Esophagus muscularis mucosa (tissue), 4 donors: ENCODE measurements at regions of chr14 and their contacts with region 1.

Region 1: GRCh38 chr14:104563742-104564615 is 15.6 kb upstream of the C14orf180 start:
- DNase-seq: no peak
- H3K4me3 ChIP-seq: no peak overlapping the region
- H3K27ac ChIP-seq: no peak overlapping the region
- H3K4me1 ChIP-seq: peaks cover 9 to 13% (median 11%) of the 10 kb centered on the region in 4 donors
- H3K27me3 ChIP-seq: peaks cover 0 to 89% (median 4%) of the 10 kb centered on the region in 4 donors
- CTCF ChIP-seq: peak; percentile 60 to 73 (median 66)
- EP300 ChIP-seq: no peak
- POLR2A ChIP-seq: no peak

Region 2: GRCh38 chr14:104094709-104095438 is 469.1 kb before region 1 on chr14:
- intact Hi-C with region 1: loop called (anchors 10 kb)
- DNase-seq: no peak
- H3K4me3 ChIP-seq: no peak overlapping the region
- H3K27ac ChIP-seq: no peak overlapping the region
- H3K4me1 ChIP-seq: peaks cover 0 to 6% (median 2%) of the 10 kb centered on the region in 4 donors
- H3K27me3 ChIP-seq: peaks cover 0 to 59% (median 6%) of the 10 kb centered on the region in 4 donors
- CTCF ChIP-seq: peak; percentile 54 to 84 (median 71)
- EP300 ChIP-seq: no peak
- POLR2A ChIP-seq: no peak

Region 3: GRCh38 chr14:104137297-104138097 is 426.5 kb before region 1 on chr14:
- intact Hi-C with region 1: loop called (anchors 2 kb)
- DNase-seq: no peak
- H3K4me3 ChIP-seq: peak overlapping the region; percentile 52 to 65 (median 56)
- H3K27ac ChIP-seq: peak overlapping the region in 3 of 4 donors; percentile 5 to 59 (median 19)
- H3K4me1 ChIP-seq: peaks cover 32 to 50% (median 46%) of the 10 kb centered on the region in 4 donors
- H3K27me3 ChIP-seq: peaks cover 7 to 84% (median 32%) of the 10 kb centered on the region in 4 donors
- CTCF ChIP-seq: peak; percentile 74 to 88 (median 86)
- EP300 ChIP-seq: no peak
- POLR2A ChIP-seq: no peak

Region 4: GRCh38 chr14:104843442-104844305 is 279.7 kb after region 1 on chr14:
- intact Hi-C with region 1: no loop called
- DNase-seq: no peak
- H3K4me3 ChIP-seq: peak overlapping the region; percentile 46 to 59 (median 52)
- H3K27ac ChIP-seq: no peak overlapping the region
- H3K4me1 ChIP-seq: peaks cover 13 to 22% (median 20%) of the 10 kb centered on the region in 4 donors
- H3K27me3 ChIP-seq: peaks cover 0 to 69% (median 19%) of the 10 kb centered on the region in 4 donors
- CTCF ChIP-seq: no peak
- EP300 ChIP-seq: no peak
- POLR2A ChIP-seq: no peak